ENCODE measurements at regions of chr5 and their contacts with region 1.

Region 1: GRCh38 chr5:75681125-75681830 is 36.0 kb downstream of the POC5 start:
- DNase-seq: peak; percentile 55
- ATAC-seq: peak; percentile 56
- H3K4me3 ChIP-seq: no peak overlapping the region
- H3K4me3 Mint-ChIP-seq: no peak overlapping the region
- H3K27ac ChIP-seq: no peak overlapping the region
- H3K27ac Mint-ChIP-seq: no peak overlapping the region
- H3K4me1 ChIP-seq: peaks cover 0 to 3% of the 10 kb centered on the region in 2 donors
- H3K4me1 Mint-ChIP-seq: peaks cover 7% of the 10 kb centered on the region
- H3K27me3 ChIP-seq: no peaks in the 10 kb centered on the region
- H3K27me3 Mint-ChIP-seq: no peaks in the 10 kb centered on the region
- CTCF ChIP-seq: peak; percentile 86

Region 2: DNA sequence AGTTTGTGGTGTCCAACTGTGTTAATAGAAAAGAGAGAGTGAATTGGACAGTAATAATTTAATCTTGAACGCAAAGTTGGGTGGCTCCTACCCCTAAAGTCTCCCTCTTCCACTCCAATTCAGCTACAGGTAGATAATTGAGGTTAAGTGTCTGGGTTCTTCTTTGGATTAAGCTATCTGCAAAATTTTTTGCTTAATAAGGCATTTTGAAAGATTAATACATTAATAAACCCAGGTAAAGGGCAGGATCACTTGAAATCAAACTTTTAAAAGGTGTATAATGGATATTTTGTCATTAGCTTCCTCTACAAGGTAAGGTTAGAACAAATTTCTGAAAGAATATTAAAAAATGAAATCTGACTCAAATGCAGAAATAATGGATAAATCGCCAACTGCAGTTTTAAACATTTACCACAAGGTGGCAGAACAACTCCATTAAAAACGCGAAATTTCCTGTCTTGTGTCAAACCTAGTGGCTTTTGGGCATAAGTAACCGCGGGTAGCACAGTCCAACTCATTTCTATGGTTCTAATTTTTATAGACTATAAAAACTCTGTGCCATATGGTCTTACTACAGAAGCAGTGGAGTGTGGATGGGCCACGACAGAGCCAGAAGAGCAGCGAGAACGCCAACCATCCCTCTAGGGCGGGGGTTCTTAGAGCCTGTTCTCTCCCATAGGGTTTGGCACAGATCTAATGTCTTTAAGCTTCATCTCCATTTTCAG is 1778.8 kb before region 1 on chr5:
- CTCF ChIA-PET with region 1: interaction called, 3 read pairs
- POLR2A ChIA-PET with region 1: no interaction called
- intact Hi-C with region 1: loop called (anchors 5 kb)
- DNase-seq: peak; percentile 64
- ATAC-seq: no peak
- H3K4me3 ChIP-seq: no peak overlapping the region
- H3K4me3 Mint-ChIP-seq: no peak overlapping the region
- H3K27ac ChIP-seq: no peak overlapping the region
- H3K27ac Mint-ChIP-seq: no peak overlapping the region
- H3K4me1 ChIP-seq: no peaks in the 10 kb centered on the region
- H3K4me1 Mint-ChIP-seq: no peaks in the 10 kb centered on the region
- H3K27me3 ChIP-seq: peaks cover 0 to 5% (median 0%) of the 10 kb centered on the region in 4 experiments
- H3K27me3 Mint-ChIP-seq: peaks cover 42% of the 10 kb centered on the region
- CTCF ChIP-seq: peak; percentile 94

Region 3: GRCh38 chr5:75049456-75050351 is 631.6 kb before region 1 on chr5:
- CTCF ChIA-PET with region 1: interaction called, 15 read pairs
- POLR2A ChIA-PET with region 1: no interaction called
- intact Hi-C with region 1: loop called (anchors 2 kb)
- DNase-seq: peak; percentile 56
- ATAC-seq: peak; percentile 43
- H3K4me3 ChIP-seq: no peak overlapping the region
- H3K4me3 Mint-ChIP-seq: no peak overlapping the region
- H3K27ac ChIP-seq: no peak overlapping the region
- H3K27ac Mint-ChIP-seq: no peak overlapping the region
- H3K4me1 ChIP-seq: peaks cover 11 to 13% of the 10 kb centered on the region in 2 donors
- H3K4me1 Mint-ChIP-seq: peaks cover 12% of the 10 kb centered on the region
- H3K27me3 ChIP-seq: peaks cover 0 to 42% (median 8%) of the 10 kb centered on the region in 4 experiments
- H3K27me3 Mint-ChIP-seq: peaks cover 50% of the 10 kb centered on the region
- CTCF ChIP-seq: peak; percentile 73

Region 4: GRCh38 chr5:75236322-75237316 is 444.7 kb before region 1 on chr5 and contains the start of gene ANKRD31:
- CTCF ChIA-PET with region 1: interaction called, 95 read pairs
- POLR2A ChIA-PET with region 1: no interaction called
- intact Hi-C with region 1: loop called (anchors 1 kb)
- DNase-seq: peak; percentile 93
- ATAC-seq: peak; percentile 99
- H3K4me3 ChIP-seq: peak within 1 kb of the TSS; percentile 57 to 84 (median 73)
- H3K4me3 Mint-ChIP-seq: peak within 1 kb of the TSS; percentile 99
- H3K27ac ChIP-seq: peak within 1 kb of the TSS; percentile 45 to 63
- H3K27ac Mint-ChIP-seq: peak within 1 kb of the TSS; percentile 92
- H3K4me1 ChIP-seq: peaks cover 4 to 8% of the 10 kb centered on the region in 2 donors
- H3K4me1 Mint-ChIP-seq: peaks cover 11% of the 10 kb centered on the region
- H3K27me3 ChIP-seq: no peaks in the 10 kb centered on the region
- H3K27me3 Mint-ChIP-seq: peaks cover 7% of the 10 kb centered on the region
- CTCF ChIP-seq: peak; percentile 87
- total RNA-seq, gene ANKRD31: 0.10 TPM in 2 replicates

Region 5: GRCh38 chr5:75373862-75374261 is 307.4 kb before region 1 on chr5:
- CTCF ChIA-PET with region 1: no interaction called
- POLR2A ChIA-PET with region 1: no interaction called
- intact Hi-C with region 1: loop called (anchors 10 kb)
- DNase-seq: no peak
- ATAC-seq: no peak
- H3K4me3 ChIP-seq: no peak overlapping the region
- H3K4me3 Mint-ChIP-seq: no peak overlapping the region
- H3K27ac ChIP-seq: no peak overlapping the region
- H3K27ac Mint-ChIP-seq: no peak overlapping the region
- H3K4me1 ChIP-seq: no peaks in the 10 kb centered on the region
- H3K4me1 Mint-ChIP-seq: no peaks in the 10 kb centered on the region
- H3K27me3 ChIP-seq: no peaks in the 10 kb centered on the region
- H3K27me3 Mint-ChIP-seq: no peaks in the 10 kb centered on the region
- CTCF ChIP-seq: no peak

Region 6: GRCh38 chr5:75660678-75661465 is 20.4 kb before region 1 on chr5:
- CTCF ChIA-PET with region 1: interaction called, 3 read pairs
- POLR2A ChIA-PET with region 1: interaction called, 10 read pairs
- intact Hi-C with region 1: no loop called
- DNase-seq: no peak
- ATAC-seq: no peak
- H3K4me3 ChIP-seq: no peak overlapping the region
- H3K4me3 Mint-ChIP-seq: no peak overlapping the region
- H3K27ac ChIP-seq: no peak overlapping the region
- H3K27ac Mint-ChIP-seq: no peak overlapping the region
- H3K4me1 ChIP-seq: no peaks in the 10 kb centered on the region
- H3K4me1 Mint-ChIP-seq: no peaks in the 10 kb centered on the region
- H3K27me3 ChIP-seq: no peaks in the 10 kb centered on the region
- H3K27me3 Mint-ChIP-seq: no peaks in the 10 kb centered on the region
- CTCF ChIP-seq: no peak

Measured in B cell (primary cell).